ENCODE measurements at regions of chr22 and their contacts with region 1.

Region 1: DNA sequence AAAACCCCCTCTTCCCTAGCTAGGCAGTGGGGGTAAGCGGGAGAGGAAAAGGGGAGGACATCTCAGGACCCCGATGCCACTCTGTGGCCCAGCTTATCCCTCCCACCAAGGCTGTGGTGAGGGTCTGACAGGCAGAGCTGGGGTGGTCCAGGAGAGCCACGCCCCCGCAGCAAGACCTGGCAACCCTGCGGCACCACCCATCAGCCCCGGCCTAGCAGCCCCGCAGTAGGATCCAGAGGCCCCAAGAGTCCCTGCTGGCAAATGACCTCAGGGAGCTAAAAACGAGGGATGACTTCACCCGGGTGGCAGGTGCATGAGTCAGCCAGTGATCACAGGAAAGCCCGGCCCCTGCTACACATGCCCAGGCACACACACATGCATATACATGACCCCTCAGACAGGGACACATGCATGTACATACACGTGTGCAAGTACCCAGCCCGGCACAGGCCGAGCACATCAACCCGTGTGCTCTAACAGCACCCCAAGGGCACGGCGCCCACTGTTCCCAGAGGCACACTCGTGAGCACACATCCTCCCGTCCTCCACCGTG is 32.3 kb downstream of the ARVCF start:
- DNase-seq: peak; percentile 84 to 89
- ATAC-seq: no peak
- H3K4me3 ChIP-seq: no peak overlapping the region
- H3K27ac ChIP-seq: peak overlapping the region; percentile 71 to 72
- H3K4me1 ChIP-seq: no peaks in the 10 kb centered on the region
- H3K27me3 ChIP-seq: no peaks in the 10 kb centered on the region

Region 2: GRCh38 chr22:19995626-19996335 is 11.5 kb after region 1 on chr22:
- intact Hi-C with region 1: loop called in 1 of 2 experiments (anchors 1 kb)
- DNase-seq: peak; percentile 92 to 93
- ATAC-seq: peak; percentile 62
- H3K4me3 ChIP-seq: no peak overlapping the region
- H3K27ac ChIP-seq: peak overlapping the region; percentile 89 to 91
- H3K4me1 ChIP-seq: no peaks in the 10 kb centered on the region
- H3K27me3 ChIP-seq: no peaks in the 10 kb centered on the region

Measured in aorta (tissue), 5 donors.